GM18951 (cell line): ENCODE measurements at regions of chr6 and their contacts with region 1.

Region 1: DNA sequence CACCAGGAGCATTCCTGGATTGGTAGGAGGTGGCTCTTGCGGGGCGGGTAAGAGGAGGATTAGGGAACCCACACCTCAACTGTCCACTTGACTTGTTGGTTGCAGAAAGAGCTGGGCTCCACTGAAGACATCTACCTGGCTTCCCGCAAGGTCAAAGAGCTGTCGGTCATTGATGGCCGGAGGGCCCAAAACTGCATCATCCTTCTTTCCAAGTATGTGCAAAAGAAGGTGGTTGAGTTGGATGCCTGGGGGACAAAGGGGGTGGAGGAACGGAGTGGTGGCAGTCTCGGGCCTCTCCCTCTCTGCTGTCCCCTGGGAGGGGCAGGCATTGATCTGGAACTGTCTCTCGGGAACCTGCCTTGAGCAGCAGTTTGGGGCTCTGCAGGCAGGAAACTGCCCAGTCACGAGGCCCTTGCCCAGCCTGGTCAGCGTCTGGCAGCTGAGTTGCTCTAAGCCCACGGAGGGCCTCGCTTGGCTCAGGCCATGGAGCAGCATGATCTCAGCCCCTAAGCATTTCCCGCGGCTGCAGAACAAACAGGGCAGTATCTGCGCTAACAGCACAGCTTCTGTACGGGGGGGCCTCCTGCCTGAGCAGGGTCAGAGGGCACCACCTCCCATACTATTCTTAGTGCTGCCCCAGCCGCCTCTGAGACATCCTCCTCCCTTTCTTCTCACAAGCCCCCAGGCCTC is 46.7 kb downstream of the MOCS1 start:
- POLR2A ChIP-seq: no peak

Region 2: DNA sequence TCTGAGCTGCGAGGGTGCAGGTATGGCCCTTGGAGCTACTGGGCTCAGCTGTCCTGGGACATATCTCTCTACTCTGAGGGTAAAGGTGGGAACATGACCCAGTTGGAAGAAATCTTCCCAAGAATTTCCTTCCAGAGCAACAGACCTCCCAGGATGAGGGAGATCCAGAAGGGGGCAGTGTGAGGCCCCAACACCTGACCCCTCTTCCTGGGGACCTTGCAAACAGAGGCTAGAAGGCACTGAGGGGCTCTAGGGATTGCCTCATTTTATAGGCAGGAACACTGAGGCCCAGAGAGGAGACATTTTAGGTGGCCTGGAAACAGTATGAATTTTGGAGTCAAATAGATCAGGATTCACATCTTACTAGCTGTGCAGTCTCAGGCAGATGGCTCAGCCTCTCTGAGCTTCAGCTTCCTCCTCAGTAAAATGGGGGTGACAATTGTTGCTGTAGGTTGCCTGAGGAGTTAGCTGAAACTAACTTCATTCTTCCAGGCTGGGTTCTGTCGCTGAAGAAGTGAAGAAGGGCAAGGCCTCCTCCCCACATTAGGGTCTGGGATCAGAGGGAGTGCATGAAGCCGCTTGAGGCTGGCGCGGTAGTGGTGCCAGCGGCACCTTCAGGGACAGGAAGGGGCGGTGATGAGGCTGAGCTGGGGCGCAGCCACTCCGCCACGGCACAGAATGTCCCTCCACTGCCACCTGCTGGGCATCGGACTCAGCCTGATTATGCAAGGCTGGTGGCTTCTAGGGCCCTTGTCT is 584.7 kb before region 1 on chr6:
- in situ Hi-C with region 1: no loop called
- POLR2A ChIP-seq: no peak

Region 3: DNA sequence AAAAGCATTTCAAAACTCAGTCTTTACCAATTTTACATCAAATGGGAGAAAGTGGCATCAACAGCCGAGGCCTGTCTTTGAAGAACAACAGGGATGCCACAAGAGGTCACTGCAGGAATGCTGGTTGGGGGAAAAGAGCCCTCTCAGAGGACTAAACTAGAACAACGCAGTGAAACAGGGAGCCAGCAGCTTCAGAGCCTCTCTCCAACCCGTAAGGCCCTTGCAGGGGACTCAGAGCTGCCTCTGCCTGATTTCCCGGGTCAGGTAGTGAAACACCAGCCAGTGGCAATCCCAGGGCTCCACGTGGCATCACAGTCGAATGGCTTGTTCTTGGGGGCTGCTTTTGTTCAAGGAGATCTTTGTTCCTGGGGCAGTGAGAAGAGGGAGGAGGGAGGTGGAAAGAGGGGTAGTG is 510.0 kb before region 1 on chr6:
- in situ Hi-C with region 1: loop called (anchors 5 kb)
- POLR2A ChIP-seq: no peak